ENCODE measurements at regions of chr9 and their contacts with region 1.

Region 1: GRCh38 chr9:116149844-116150243 is 3.7 kb upstream of the PAPPA start:
- DNase-seq: peak; percentile 47
- H3K4me3 ChIP-seq: no peak overlapping the region
- H3K27ac ChIP-seq: no peak overlapping the region
- H3K4me1 ChIP-seq: peaks cover 37% of the 10 kb centered on the region
- H3K27me3 ChIP-seq: no peaks in the 10 kb centered on the region

Region 2: GRCh38 chr9:115591584-115591984 is 558.3 kb before region 1 on chr9:
- in situ Hi-C with region 1: loop called (anchors 10 kb)
- DNase-seq: peak; percentile 99
- H3K4me3 ChIP-seq: peak overlapping the region; percentile 26; the same call in 1 of the 2 replicates
- H3K27ac ChIP-seq: peak overlapping the region; percentile 96
- H3K4me1 ChIP-seq: peaks cover 68% of the 10 kb centered on the region
- H3K27me3 ChIP-seq: no peaks in the 10 kb centered on the region

Region 3: GRCh38 chr9:115694014-115694413 is 455.8 kb before region 1 on chr9:
- in situ Hi-C with region 1: loop called (anchors 10 kb)
- DNase-seq: peak; percentile 93
- H3K4me3 ChIP-seq: no peak overlapping the region
- H3K27ac ChIP-seq: peak overlapping the region; percentile 100
- H3K4me1 ChIP-seq: peaks cover 46% of the 10 kb centered on the region
- H3K27me3 ChIP-seq: no peaks in the 10 kb centered on the region

Region 4: DNA sequence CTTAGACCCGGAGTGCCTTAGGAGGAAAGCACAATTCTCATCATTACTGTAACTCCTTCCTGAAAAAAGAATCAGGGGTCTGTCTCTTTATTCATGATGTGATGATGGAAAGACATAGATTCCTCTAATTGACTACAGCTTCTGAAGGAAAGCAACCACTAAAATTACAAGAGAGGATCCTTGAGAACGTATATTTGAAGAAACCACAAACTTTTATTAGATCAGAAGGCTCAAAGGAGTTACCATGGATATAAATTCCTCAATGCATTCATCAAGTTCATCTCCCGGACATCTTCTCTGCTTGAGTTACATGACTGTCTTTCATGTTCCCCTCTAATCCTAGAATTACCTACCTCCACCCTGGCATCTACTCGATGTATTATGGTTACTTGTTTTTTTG is 100.4 kb before region 1 on chr9:
- in situ Hi-C with region 1: no loop called
- DNase-seq: no peak
- H3K4me3 ChIP-seq: no peak overlapping the region
- H3K27ac ChIP-seq: no peak overlapping the region
- H3K4me1 ChIP-seq: no peaks in the 10 kb centered on the region
- H3K27me3 ChIP-seq: no peaks in the 10 kb centered on the region

Region 5: DNA sequence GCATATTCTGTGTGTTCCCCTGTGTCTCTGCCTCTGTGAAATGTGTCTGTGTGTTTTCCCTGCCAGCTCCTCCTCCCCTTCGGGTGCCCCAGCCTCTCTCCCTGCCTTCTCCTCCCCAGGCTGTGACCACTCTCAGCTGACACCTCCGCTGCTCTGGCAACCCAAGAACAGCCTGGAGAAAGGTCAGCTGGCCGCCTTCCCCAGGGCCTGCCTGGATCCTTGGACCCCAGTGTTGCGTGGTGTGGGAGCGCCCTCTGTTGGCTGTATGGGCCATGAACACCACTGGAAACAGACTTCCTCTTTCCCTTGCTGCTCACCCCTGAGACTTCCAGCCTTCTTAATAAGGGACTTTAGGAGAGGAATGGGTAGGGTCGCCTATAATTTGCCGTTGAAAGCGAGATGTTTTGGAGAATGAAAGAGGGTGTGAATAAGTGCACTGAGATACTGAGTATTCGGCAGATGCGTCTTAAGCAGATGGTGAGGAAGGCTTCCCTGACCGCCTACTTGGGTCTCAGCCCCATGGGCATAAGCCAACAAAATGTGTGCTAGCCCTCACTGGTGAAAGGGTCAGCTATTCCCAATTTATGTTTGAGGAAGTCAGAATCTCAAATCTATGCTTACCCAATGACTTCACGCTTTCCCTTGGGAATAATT is 422.4 kb after region 1 on chr9:
- in situ Hi-C with region 1: loop called (anchors 25 kb)
- DNase-seq: peak; percentile 88
- H3K4me3 ChIP-seq: no peak overlapping the region
- H3K27ac ChIP-seq: no peak overlapping the region
- H3K4me1 ChIP-seq: peaks cover 1% of the 10 kb centered on the region; the same call in 1 of the 2 replicates
- H3K27me3 ChIP-seq: no peaks in the 10 kb centered on the region

Measured in GM23248 (cell line).